Activated naive CD4-positive, alpha-beta T cell treated with anti-CD3 and anti-CD28 coated beads for 36 hours (primary cell): ENCODE measurements at regions of chr7 and their contacts with region 1.

Region 1: GRCh38 chr7:80941208-80941758 is 22.4 kb upstream of the SEMA3C start:
- DNase-seq: no peak
- H3K4me3 Mint-ChIP-seq: no peak overlapping the region
- H3K27ac Mint-ChIP-seq: no peak overlapping the region
- H3K4me1 Mint-ChIP-seq: no peaks in the 10 kb centered on the region
- H3K27me3 Mint-ChIP-seq: no peaks in the 10 kb centered on the region

Region 2: DNA sequence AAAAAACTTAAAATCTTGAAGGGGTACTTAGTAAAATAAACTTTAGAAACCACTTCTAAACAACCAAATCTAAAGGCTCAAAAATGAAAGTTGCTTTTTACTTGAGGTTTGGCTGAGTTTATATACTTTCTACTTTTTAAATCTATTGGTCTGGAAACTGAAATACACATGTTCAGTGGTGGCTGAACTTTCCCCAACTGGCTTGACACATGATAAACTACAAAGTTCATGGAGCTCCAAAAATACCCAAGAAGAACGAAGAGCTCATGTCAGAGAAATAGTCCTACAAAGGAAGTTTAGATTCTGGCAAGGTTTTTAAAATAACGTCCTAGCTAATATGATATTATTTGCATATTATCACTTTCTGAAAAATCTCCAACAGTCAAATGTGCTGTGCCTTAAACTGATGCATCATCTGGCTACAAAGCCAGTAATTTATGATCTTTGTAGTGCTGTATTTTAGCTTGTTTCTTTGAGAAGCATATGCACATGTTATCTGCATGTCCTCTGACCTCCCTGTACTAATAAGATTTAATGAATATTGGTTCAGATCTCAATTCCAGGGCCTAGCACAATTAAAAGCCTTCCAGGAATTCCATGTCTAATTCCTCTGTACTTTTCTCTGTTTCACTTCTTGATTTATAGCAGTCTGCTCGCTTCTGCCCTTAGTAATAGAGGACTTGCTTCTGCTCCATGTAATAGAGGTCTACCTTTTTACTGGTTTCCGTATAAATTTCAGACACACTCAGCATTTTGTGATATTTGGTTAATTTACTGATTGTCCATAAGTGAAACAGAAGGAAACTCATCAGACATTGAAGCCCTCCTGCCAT is 50.6 kb before region 1 on chr7:
- CTCF ChIA-PET with region 1: no interaction called
- intact Hi-C with region 1: loop called (anchors 5 kb)
- DNase-seq: no peak
- H3K4me3 Mint-ChIP-seq: no peak overlapping the region
- H3K27ac Mint-ChIP-seq: no peak overlapping the region
- H3K4me1 Mint-ChIP-seq: no peaks in the 10 kb centered on the region
- H3K27me3 Mint-ChIP-seq: no peaks in the 10 kb centered on the region